CD4-positive, alpha-beta memory T cell (primary cell): ENCODE measurements at regions of chr9 and their contacts with region 1.

Region 1: DNA sequence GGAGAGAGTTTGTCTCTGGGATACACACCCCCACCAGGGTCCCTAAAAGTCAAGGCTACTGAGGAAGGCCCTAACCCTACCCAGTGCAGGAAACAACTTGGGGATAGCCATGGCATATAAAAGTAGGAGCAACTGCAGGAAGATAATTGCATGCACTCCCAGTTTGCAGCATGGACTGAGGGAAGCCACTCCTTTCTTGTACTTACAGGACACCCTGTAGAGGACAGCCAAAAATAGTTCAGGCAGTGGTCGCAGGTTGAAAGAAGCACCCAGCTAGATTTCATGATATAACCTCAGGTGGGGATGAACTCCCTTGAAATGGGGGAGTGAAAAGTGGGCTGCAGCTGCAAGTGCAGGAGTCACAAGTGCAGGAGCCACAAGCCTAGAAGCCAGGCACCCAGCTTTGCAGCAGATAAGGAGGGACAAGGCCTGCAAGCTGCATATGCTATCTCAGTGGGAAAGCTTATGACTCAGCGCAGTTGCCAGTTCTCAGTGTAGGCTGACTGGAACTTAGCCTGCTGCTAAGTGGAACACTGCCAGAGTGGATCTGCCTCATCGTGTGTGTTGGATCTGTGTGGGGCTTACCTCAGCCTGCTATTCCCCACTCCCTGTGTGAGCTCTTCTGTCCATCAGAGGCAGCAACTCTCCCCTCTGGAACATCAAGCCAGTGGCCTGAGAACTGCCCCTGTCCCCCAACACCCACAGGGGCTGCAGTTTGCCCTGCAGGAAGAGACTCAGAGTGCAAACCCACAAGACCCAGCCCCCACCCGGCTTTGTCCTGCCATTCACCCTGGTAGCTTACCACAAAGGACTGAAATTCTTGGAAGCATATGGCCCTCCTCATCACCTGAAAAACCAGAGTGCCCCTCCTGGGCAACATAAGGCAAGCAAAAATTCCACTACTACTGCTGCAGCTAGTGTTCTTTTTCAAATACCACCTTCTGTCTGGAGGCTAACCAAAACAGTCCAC is 42.7 kb downstream of the CYLC2 start:
- DNase-seq: no peak
- H3K4me3 ChIP-seq: no peak overlapping the region
- H3K4me3 Mint-ChIP-seq: no peak overlapping the region
- H3K27ac ChIP-seq: no peak overlapping the region
- H3K27ac Mint-ChIP-seq: no peak overlapping the region
- H3K4me1 ChIP-seq: no peaks in the 10 kb centered on the region
- H3K4me1 Mint-ChIP-seq: no peaks in the 10 kb centered on the region
- H3K27me3 ChIP-seq: no peaks in the 10 kb centered on the region
- H3K27me3 Mint-ChIP-seq: no peaks in the 10 kb centered on the region

Region 2: DNA sequence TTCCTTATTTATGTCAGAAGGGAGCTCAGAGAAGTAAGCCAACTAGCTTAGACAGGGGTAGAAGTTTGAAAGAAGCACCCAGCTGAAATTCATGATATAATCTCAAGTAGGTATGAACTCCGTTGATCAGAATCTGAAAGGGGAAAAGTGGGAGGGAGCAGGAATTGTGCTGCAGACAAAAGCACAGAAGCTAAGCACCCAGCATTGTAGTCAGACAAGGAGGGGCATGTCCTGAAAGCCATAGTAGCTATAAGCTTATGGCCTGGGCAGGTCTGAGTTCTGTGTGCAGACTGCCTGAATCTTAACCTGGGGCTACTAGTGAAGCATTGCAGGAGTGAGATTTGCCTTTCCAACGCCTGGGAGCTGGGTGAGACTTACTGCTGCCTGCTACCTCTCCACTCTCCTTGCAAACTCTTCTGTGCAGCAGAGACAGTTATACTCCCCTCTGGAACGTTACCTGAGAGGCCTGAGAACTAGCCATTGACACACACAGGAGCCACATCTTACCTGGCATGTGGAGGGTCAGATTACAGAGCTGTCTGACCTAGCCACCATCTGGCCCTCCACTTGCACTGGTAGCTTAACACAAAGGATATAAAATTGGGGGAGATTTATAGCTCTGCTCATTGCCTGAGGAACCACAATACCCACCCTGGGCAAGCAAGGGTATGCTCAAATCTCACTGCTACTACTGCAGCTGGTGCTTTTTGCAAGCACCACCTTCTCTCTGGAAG is 52.5 kb before region 1 on chr9:
- CTCF ChIA-PET with region 1: no interaction called
- POLR2A ChIA-PET with region 1: no interaction called
- intact Hi-C with region 1: loop called (anchors 5 kb)
- DNase-seq: no peak
- H3K4me3 ChIP-seq: no peak overlapping the region
- H3K4me3 Mint-ChIP-seq: no peak overlapping the region
- H3K27ac ChIP-seq: no peak overlapping the region
- H3K27ac Mint-ChIP-seq: no peak overlapping the region
- H3K4me1 ChIP-seq: no peaks in the 10 kb centered on the region
- H3K4me1 Mint-ChIP-seq: no peaks in the 10 kb centered on the region
- H3K27me3 ChIP-seq: no peaks in the 10 kb centered on the region
- H3K27me3 Mint-ChIP-seq: no peaks in the 10 kb centered on the region

Region 3: DNA sequence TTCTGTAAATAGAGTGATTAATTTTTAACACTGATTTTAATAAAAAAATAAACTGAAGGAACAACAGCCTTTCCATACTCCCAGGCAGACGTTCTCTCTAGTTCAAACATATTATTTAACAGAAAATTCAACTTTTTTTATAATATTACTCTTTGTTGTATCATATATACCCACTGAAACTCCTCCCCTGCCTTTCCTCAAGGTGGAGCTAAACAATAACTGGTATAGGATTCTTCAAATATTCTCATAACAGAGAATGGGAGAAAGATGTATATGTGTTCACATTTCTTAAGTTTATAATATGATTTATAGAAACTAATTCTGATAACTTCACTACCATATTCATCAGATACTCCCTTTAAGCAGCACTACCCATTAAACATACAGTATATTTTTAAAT is 40.8 kb after region 1 on chr9:
- CTCF ChIA-PET with region 1: no interaction called
- POLR2A ChIA-PET with region 1: no interaction called
- intact Hi-C with region 1: no loop called
- DNase-seq: no peak
- H3K4me3 ChIP-seq: no peak overlapping the region
- H3K4me3 Mint-ChIP-seq: no peak overlapping the region
- H3K27ac ChIP-seq: no peak overlapping the region
- H3K27ac Mint-ChIP-seq: no peak overlapping the region
- H3K4me1 ChIP-seq: no peaks in the 10 kb centered on the region
- H3K4me1 Mint-ChIP-seq: no peaks in the 10 kb centered on the region
- H3K27me3 ChIP-seq: no peaks in the 10 kb centered on the region
- H3K27me3 Mint-ChIP-seq: no peaks in the 10 kb centered on the region

Region 4: GRCh38 chr9:103407260-103407659 is 369.5 kb after region 1 on chr9:
- CTCF ChIA-PET with region 1: no interaction called
- POLR2A ChIA-PET with region 1: no interaction called
- intact Hi-C with region 1: no loop called
- DNase-seq: no peak
- H3K4me3 ChIP-seq: no peak overlapping the region
- H3K4me3 Mint-ChIP-seq: no peak overlapping the region
- H3K27ac ChIP-seq: no peak overlapping the region
- H3K27ac Mint-ChIP-seq: no peak overlapping the region
- H3K4me1 ChIP-seq: no peaks in the 10 kb centered on the region
- H3K4me1 Mint-ChIP-seq: no peaks in the 10 kb centered on the region
- H3K27me3 ChIP-seq: no peaks in the 10 kb centered on the region
- H3K27me3 Mint-ChIP-seq: no peaks in the 10 kb centered on the region